Posterior vena cava (tissue), 2 donors: ENCODE measurements at regions of chr17 and their contacts with region 1.

Region 1: GRCh38 chr17:409848-410545 is 57.4 kb upstream of the RPH3AL start:
- DNase-seq: peak; percentile 100

Region 2: GRCh38 chr17:700504-701094 is 290.6 kb after region 1 on chr17:
- intact Hi-C with region 1: loop called (anchors 2 to 5 kb)
- DNase-seq: no peak